ENCODE measurements at regions of chr10 and their contacts with region 1.

Region 1: DNA sequence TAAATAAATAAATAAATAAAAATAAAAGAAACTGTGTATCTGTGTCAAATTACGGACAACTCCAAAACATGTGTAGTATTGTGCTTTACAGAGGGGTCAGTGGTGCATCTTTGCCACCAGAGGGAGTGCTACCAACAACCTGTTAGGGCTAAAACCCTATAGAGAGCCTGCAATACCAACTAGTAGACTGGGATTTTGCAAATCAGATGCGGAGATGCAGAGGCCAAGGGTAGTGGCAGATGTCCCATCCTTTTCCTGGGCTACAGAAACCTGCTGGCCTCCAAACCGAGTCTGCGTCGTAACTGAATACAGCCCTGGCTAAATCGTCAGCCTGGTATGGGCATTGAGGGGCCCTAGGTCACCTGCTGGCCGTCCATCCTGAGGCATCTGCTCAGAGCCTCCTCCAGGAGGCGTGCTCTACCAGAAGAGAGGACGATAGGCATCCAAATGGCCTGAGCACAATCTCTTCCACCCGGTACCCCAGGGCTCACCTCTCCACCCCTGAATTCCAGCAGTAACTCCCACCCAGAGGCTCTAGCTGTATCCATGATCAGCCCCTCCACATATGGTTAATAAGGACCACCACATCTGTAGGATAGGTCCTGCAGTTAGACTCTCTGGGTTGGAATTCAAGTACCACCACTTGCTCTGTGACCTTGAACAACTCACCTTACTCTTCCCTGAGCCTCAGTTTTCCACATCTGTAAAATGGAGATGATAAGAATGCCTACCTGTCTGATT is 6.2 kb upstream of the RRP12 start:
- DNase-seq: peak; percentile 89
- H3K4me3 ChIP-seq: peak overlapping the region; percentile 54
- H3K27ac ChIP-seq: no peak overlapping the region
- H3K4me1 ChIP-seq: peaks cover 19% of the 10 kb centered on the region
- CTCF ChIP-seq: peak; percentile 94

Region 2: DNA sequence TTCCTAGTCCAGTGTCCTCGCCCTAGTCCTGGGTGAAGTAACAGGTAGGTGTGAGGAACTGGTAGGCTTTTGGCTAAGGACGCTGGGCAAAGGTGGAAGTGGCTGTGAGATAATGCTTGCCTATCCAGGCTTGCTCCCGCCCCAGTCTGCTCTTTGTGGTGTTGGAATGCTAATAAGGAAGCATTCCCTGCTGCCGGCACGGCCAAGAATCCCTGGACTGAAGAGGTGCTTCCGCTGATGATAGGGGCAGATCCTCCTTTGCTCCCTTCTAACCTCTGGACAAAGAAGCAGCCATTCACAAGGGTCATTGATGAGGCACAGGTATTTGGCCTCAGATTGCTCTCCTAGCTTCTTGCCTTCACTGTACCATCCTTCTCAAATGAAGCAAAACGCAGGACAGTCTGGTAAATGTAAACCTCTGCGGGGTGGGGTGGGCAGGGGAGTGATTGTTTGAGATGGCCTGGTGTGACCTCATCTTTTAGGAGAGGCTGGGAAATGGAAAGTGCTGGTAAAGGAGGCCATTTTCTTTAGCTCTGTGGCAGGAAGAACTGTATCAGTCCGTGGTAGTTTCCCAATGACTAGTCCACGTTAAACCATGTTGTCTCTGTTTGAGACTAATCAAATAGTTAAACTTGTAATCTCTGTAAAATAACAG is 20.3 kb after region 1 on chr10:
- CTCF ChIA-PET with region 1: interaction called, 3 read pairs
- POLR2A ChIA-PET with region 1: interaction called, 8 read pairs
- intact Hi-C with region 1: loop called (anchors 1 kb)
- DNase-seq: no peak
- H3K4me3 ChIP-seq: peak overlapping the region; percentile 87
- H3K27ac ChIP-seq: peak overlapping the region; percentile 70
- H3K4me1 ChIP-seq: peaks cover 17% of the 10 kb centered on the region
- CTCF ChIP-seq: no peak

Region 3: DNA sequence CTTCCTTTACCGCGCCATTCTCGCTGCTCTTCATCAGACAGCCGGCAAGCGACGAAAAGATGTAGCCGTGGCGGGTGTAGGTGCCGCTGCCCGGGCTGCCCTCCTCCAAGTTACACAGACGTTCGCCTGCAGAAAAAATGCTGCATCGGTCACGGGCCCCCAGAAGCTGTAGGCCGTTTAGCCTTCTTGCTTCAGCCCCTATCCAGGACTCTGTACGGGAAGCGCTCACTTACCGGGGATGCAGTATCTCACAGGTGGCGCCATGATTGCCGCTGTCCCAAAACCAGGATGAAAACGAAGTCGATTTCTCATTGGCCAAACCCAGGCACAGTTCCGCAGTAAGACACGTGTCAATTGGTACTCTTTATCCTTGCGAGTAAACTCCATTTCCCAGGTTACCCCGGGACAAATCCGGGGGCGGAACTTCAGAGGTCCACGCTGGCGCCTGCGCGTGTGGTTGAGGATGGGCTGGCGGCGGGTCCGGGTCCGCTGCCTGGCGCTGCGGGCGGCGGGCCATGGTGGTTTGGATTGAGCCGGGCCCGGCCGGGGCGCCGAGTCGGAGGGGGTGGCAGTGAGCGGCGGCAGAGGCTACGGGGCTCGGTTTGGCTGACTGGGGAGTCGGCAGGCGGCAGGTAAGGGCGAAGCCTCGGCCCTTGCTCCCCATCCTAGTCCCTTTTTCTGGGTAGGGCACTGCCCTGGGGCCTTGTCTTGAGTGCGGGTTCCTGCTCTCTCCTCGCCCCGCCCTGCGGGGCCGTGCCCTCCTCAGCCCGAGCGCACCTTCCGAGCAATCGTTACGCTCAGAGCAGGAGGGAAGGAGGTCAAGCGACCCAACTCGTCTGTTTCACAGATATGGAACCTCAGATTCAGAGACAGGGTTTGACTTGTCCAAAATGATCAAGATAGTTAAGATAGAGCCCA is 38.6 kb after region 1 on chr10 and contains the starts of genes EXOSC1 and ZDHHC16:
- CTCF ChIA-PET with region 1: no interaction called
- POLR2A ChIA-PET with region 1: interaction called, 5 read pairs
- intact Hi-C with region 1: loop called (anchors 1 kb)
- DNase-seq: peak; percentile 96
- H3K4me3 ChIP-seq: peak within 1 kb of the TSS; percentile 89
- H3K27ac ChIP-seq: peak within 1 kb of the TSS; percentile 36
- H3K4me1 ChIP-seq: peaks cover 28% of the 10 kb centered on the region
- CTCF ChIP-seq: peak; percentile 38
- total RNA-seq, gene EXOSC1: 46.8 and 59.6 TPM in 2 replicates
- total RNA-seq, gene ZDHHC16: 28.7 and 31.0 TPM in 2 replicates

Region 4: GRCh38 chr10:97479939-97480338 is 72.6 kb after region 1 on chr10:
- CTCF ChIA-PET with region 1: no interaction called
- POLR2A ChIA-PET with region 1: no interaction called
- intact Hi-C with region 1: no loop called
- DNase-seq: no peak
- H3K4me3 ChIP-seq: no peak overlapping the region
- H3K27ac ChIP-seq: no peak overlapping the region
- H3K4me1 ChIP-seq: no peaks in the 10 kb centered on the region
- CTCF ChIP-seq: no peak

Region 5: DNA sequence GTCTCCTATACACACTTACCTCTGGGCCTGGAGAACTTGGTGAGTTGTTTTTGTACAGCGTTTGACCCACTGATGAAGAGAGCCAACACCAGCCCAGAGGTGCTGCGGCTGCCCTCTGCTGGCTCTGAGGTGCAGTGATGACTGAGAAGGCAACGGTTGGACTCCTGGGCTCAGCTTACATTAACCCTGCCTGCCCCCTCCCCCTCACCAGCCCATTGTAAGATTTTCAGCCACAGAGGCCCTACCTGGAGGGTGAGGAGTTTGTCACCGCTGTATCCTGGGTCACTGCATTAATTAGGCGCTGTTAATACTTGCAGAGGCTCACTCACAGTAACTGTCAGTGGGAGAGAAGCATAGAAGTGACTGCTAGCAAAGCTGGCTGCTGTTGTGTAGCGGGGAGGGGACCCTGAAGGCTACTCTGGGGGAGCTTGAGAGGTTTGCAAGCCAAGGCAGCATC is 146.2 kb after region 1 on chr10:
- CTCF ChIA-PET with region 1: no interaction called
- POLR2A ChIA-PET with region 1: no interaction called
- intact Hi-C with region 1: loop called (anchors 1 kb)
- DNase-seq: peak; percentile 57
- H3K4me3 ChIP-seq: no peak overlapping the region
- H3K27ac ChIP-seq: no peak overlapping the region
- H3K4me1 ChIP-seq: no peaks in the 10 kb centered on the region
- CTCF ChIP-seq: peak; percentile 78

Region 6: DNA sequence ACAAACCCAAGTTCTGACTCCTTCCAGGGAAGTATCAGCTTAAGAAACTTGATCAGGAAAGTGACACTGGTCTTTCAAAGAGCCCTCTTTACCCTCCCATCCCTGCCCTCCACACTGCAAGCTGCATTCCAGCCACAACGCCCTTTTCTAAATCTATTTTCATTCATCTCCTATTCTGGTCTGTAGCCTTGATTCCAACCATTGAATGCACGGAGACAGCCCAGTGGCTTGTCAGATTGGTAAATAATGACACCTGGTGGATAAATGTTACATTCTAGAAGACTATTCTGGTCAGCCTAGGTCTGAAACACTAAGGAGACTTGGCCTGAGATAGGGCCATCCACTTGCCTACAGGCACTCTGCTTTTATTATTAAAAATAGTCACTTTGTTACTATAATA is 205.0 kb after region 1 on chr10:
- CTCF ChIA-PET with region 1: no interaction called
- POLR2A ChIA-PET with region 1: no interaction called
- intact Hi-C with region 1: loop called (anchors 2 kb)
- DNase-seq: peak; percentile 57
- H3K4me3 ChIP-seq: no peak overlapping the region
- H3K27ac ChIP-seq: no peak overlapping the region
- H3K4me1 ChIP-seq: no peaks in the 10 kb centered on the region
- CTCF ChIP-seq: peak; percentile 74

Region 7: DNA sequence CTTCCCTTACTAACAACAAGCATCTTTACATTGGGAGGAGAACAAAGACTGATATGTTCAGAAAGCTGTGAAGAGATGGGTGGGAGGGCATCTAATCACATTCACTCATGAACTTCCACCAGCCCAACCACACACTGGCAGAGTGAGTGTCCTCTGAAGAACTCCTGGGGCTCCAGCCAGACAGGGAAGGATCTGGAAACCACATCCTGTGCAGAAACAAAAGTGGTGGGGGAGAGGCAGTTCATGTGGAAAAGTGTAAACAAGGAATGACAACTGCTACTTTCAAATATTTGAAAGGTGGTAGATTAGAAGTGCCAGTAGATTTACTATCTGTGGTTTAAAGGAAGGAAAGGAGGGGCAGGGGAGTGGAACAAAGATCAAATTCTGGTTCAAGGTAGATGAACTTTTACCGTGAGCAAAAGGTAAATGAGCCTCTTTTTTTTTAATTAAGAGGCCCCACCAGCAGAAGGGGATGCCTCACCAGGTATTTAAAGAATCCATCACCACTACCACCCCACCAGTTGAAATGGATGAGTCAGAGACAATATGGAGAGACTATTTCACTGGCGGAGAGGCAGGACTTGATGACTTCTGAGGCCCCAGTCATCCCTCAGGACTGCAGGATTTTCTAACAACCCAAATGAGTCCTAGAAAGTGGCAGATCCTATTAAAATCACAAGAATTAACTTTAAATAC is 1988.5 kb after region 1 on chr10:
- CTCF ChIA-PET with region 1: no interaction called
- POLR2A ChIA-PET with region 1: no interaction called
- intact Hi-C with region 1: no loop called
- DNase-seq: no peak
- H3K4me3 ChIP-seq: no peak overlapping the region
- H3K27ac ChIP-seq: no peak overlapping the region
- H3K4me1 ChIP-seq: no peaks in the 10 kb centered on the region
- CTCF ChIP-seq: no peak